ENCODE measurements at regions of chr3 and their contacts with region 1.

Region 1: DNA sequence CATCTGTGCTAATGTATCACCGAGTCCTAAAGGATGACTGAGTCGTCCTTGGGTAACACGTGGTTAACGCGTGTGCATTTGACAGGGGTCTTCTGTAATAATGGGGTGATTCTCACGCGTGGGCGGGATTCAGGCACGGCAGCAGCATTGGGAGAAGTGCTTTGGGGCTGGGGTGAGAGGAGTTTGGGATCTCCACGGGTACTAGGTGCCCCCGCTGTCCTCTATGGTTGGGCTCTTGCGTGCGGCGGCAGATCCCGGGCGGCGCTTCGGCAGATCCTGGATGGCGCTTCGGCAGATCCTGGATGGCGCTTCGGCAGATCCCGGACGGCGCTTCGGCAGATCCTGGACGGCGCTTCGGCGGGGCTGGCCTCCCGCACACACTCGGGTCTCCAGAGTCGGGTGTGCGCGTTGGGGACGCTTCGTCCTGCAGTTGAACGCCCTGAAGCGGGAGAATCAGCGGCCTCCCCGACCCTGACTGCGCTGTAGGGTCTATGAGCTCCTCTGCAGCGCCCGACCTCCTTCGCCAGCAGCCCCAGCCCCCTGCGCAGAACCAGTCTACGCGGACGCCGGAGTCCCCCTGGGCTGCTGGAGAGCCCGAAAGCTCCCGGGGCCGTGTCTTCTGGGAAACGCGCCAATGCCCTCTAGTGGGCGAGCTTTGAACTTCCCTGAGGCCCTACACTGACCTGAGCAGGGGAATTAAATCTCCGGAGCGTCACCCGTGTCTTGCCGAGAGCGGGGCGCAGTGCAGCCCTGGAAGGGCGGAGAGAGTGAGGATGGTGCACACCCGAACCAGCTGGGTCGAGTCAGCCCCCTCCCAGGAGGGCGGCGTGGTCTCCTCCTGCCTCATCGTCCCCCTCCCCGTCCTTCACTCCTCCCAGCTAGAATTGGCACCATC is 48.1 kb upstream of the EPHB3 start:
- DNase-seq: peak; percentile 75 to 95
- H3K4me3 ChIP-seq: peak overlapping the region; percentile 13 to 61 (median 50)
- H3K27ac ChIP-seq: no peak overlapping the region
- H3K4me1 ChIP-seq: peaks cover 0 to 5% (median 1%) of the 10 kb centered on the region in 4 experiments; a peak in 2 of 7 replicates
- H3K27me3 ChIP-seq: peaks cover 10 to 27% (median 17%) of the 10 kb centered on the region in 4 experiments
- CTCF ChIP-seq: peak; percentile 75 to 86 (median 79)
- EP300 ChIP-seq: no peak
- POLR2A ChIP-seq: no peak
- RAD21 ChIP-seq: peak; percentile 81 to 86

Region 2: DNA sequence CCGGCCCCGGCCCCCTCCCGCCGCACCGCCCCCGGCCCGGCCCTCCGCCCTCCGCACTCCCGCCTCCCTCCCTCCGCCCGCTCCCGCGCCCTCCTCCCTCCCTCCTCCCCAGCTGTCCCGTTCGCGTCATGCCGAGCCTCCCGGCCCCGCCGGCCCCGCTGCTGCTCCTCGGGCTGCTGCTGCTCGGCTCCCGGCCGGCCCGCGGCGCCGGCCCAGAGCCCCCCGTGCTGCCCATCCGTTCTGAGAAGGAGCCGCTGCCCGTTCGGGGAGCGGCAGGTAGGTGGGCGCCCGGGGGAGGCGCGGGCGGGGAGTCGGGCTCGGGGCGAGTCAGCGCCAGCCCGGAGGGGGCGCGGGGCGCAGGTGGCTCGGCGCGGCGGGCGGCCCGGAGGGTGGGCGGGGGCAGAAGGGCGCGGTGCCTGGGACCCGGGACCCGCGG is 133.3 kb before region 1 on chr3:
- CTCF ChIA-PET with region 1: interaction called, 10 read pairs
- POLR2A ChIA-PET with region 1: no interaction called
- DNase-seq: peak in 1 of 2 experiments; percentile 79
- H3K4me3 ChIP-seq: peak overlapping the region; percentile 32 to 71 (median 54); a peak in 7 of 8 replicates
- H3K27ac ChIP-seq: no peak overlapping the region
- H3K4me1 ChIP-seq: peaks cover 0 to 33% (median 27%) of the 10 kb centered on the region in 4 experiments; a peak in 6 of 7 replicates
- H3K27me3 ChIP-seq: peaks cover 31 to 55% (median 49%) of the 10 kb centered on the region in 4 experiments
- CTCF ChIP-seq: no peak
- EP300 ChIP-seq: no peak
- POLR2A ChIP-seq: no peak
- RAD21 ChIP-seq: no peak

Region 3: GRCh38 chr3:184474897-184475296 is 38.6 kb before region 1 on chr3:
- CTCF ChIA-PET with region 1: interaction called, 87 read pairs
- POLR2A ChIA-PET with region 1: no interaction called
- DNase-seq: no peak
- H3K4me3 ChIP-seq: no peak overlapping the region
- H3K27ac ChIP-seq: no peak overlapping the region
- H3K4me1 ChIP-seq: no peaks in the 10 kb centered on the region
- H3K27me3 ChIP-seq: no peaks in the 10 kb centered on the region
- CTCF ChIP-seq: no peak
- EP300 ChIP-seq: no peak
- POLR2A ChIP-seq: no peak
- RAD21 ChIP-seq: no peak

Region 4: GRCh38 chr3:184491867-184492615 is 21.5 kb before region 1 on chr3:
- CTCF ChIA-PET with region 1: interaction called, 19 read pairs
- POLR2A ChIA-PET with region 1: no interaction called
- DNase-seq: no peak
- H3K4me3 ChIP-seq: peak overlapping the region; percentile 20 to 61 (median 36); a peak in 5 of 8 replicates
- H3K27ac ChIP-seq: no peak overlapping the region
- H3K4me1 ChIP-seq: peaks cover 0 to 5% (median under 1%) of the 10 kb centered on the region in 4 experiments; a peak in 3 of 7 replicates
- H3K27me3 ChIP-seq: peaks cover 2 to 43% (median 35%) of the 10 kb centered on the region in 4 experiments; a peak in 6 of 7 replicates
- CTCF ChIP-seq: no peak
- EP300 ChIP-seq: no peak
- POLR2A ChIP-seq: no peak
- RAD21 ChIP-seq: no peak

Region 5: DNA sequence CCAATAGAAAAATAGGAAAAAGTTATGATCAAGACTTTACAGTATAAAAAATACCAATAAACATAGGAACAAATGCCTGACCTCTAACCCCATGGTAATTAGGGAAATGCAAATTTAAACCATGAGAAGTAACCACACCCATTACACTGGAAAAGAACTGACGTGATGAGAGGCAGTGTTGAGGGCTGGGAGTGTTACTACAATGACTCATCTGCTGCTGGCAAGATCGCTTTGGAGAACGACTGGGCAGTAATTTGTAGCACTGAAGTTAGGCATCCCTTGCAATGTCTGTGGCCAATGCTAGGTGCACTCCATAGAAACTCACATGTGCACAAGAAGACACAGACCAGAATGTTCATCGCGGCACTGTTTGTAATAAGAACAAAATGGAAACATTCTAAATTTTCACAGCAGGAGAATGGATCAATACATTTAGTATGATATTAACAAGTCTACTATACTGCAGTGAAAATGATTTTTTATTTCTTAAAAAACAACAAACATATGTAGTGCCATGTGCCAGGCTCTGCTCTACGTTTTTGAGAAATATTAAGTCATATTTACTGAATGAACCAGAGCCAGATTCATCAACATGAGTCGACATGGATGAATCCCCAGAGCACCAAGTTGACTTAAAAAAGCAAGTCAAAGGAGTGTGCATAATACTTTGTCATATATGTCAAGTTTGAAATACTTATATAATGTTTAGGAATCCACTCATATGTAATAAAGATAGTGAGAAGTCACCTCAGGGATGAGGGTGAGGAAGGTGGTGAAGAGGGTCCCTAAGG is 10.5 kb after region 1 on chr3:
- CTCF ChIA-PET with region 1: interaction called, 47 read pairs
- POLR2A ChIA-PET with region 1: interaction called, 14 read pairs
- DNase-seq: no peak
- H3K4me3 ChIP-seq: no peak overlapping the region; a peak in 1 of 8 replicates
- H3K27ac ChIP-seq: no peak overlapping the region
- H3K4me1 ChIP-seq: peaks cover 0 to 14% (median 9%) of the 10 kb centered on the region in 4 experiments
- H3K27me3 ChIP-seq: no peaks in the 10 kb centered on the region
- CTCF ChIP-seq: no peak
- EP300 ChIP-seq: no peak
- POLR2A ChIP-seq: peak in 1 of 2 experiments; percentile 33; a peak in 1 of 3 replicates
- RAD21 ChIP-seq: no peak

Region 6: DNA sequence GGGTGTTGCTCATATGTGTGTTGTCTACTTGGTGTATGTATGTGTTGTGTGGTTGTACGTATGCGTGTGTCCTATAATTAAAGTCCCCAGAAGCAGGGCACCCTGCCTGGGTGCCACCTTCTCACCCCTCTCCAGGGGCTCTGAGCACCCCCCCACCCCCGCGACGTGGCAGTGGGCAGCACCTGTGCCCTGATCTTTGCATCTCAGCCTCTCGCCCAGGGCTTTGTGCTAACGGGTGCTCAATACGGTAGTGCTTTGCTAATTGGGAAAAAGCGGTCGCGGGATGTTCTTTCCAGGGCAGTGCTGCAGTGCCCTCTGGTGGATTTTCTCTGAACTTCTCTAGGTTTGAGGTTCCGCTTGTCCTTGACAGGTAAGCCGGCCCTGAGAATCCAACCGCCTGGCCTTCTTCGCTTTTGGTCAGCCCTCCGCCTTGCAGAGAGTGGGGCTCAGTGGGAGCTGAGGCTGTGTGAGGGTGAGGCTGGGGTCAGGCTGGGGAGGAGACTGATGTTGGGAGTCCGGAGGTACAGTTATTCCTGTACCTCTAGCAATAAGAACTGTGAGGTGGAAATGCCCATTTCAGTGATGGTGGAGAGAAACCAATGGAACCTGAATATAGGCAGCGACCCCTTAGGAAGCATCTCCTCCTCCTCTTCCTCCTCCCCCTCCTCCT is 30.5 kb after region 1 on chr3:
- CTCF ChIA-PET with region 1: interaction called, 135 read pairs
- POLR2A ChIA-PET with region 1: interaction called, 3 read pairs
- DNase-seq: peak in 1 of 2 experiments; percentile 94
- H3K4me3 ChIP-seq: no peak overlapping the region
- H3K27ac ChIP-seq: no peak overlapping the region
- H3K4me1 ChIP-seq: peaks cover 0 to 5% (median under 1%) of the 10 kb centered on the region in 4 experiments; a peak in 3 of 7 replicates
- H3K27me3 ChIP-seq: peaks cover 0 to 3% (median 0%) of the 10 kb centered on the region in 4 experiments; a peak in 1 of 7 replicates
- CTCF ChIP-seq: peak; percentile 56 to 94 (median 81)
- EP300 ChIP-seq: no peak
- POLR2A ChIP-seq: no peak
- RAD21 ChIP-seq: peak; percentile 94 to 96